HEK293T (cell line): ENCODE measurements at regions of chr17 and their contacts with region 1.

Region 1: DNA sequence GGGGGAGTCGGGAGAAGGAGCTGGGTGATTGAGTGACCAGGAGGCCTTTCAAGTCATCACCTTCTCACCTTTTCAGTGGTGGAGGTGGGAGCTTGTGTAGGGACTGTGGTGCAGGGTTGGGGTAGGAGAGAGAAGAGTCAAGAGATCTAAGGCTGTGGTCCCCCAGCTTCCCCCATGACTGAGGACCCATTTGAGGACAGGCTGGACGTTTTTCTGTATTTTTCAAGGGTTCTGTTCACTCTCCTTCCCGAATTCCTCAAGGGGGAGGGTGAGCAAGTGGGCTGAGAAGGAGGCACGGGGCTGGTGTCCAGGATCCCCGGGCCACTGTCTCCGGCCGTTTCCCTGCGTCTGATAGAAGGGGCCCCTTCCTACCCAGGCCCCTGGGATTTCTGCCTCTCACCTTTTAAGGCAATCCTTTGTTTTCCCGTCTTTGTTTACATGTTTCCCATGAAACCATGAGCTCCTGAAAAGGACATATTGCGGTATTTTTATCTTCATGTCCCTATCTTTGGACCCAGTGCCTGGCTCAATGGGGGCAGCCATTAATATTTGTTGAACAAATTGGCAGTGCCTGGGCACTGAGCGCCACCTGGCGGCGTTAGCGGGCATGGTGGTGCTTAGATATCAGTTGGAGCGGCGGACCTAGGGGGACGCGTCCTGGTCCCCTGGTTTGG is 9.2 kb upstream of the CD300A start:
- DNase-seq: peak; percentile 83

Region 2: DNA sequence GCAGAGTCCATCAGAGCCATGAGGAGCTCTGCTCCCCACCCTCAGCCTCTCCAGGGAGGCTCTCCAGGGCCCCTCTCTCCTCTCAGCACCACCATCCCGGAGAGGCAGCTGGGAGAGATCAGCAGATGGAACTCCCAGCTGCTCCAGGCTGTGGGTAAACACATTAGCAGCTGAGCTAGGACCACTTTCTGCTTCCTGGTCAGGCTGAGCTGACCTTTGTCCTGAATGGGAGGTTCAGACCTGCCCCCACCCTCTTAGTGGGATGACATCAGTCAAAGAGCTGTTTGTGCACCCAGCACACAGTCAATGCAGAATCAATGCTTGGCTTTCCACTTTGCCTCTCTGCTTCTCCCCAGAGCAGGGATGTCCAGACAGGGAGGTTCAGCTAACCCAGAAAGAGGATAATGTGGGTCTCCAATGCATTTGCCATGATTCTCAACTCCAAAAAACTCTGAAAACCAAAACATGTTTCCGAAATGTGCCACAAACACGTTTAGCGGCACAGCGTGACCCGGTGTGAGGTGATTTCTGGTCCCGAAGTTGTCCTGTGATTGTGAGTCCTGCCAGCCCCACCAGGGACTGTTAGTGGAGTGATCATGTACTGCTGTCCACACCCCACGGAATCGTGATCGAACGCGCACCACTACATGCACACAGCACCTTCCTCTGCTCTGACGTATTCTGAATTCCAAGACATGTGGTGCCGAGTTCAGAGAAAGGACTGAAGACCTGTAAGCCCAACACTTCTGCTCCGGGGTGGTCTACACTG is 83.3 kb before region 1 on chr17:
- CTCF ChIA-PET with region 1: interaction called, 15 read pairs
- POLR2A ChIA-PET with region 1: interaction called, 6 read pairs
- DNase-seq: no peak

Region 3: GRCh38 chr17:74430706-74431567 is 26.3 kb before region 1 on chr17:
- CTCF ChIA-PET with region 1: no interaction called
- POLR2A ChIA-PET with region 1: interaction called, 20 read pairs
- DNase-seq: peak; percentile 63

Region 4: GRCh38 chr17:74442670-74443515 is 14.4 kb before region 1 on chr17:
- CTCF ChIA-PET with region 1: interaction called, 5 read pairs
- POLR2A ChIA-PET with region 1: interaction called, 27 read pairs
- DNase-seq: peak; percentile 73